ENCODE measurements at regions of chr2 and their contacts with region 1.

Region 1: GRCh38 chr2:212520340-212520739 is 18.3 kb downstream of the ERBB4 start:
- H3K4me3 ChIP-seq: no peak overlapping the region
- H3K27ac ChIP-seq: no peak overlapping the region
- H3K4me1 ChIP-seq: peaks cover 25% of the 10 kb centered on the region
- CTCF ChIP-seq: peak; percentile 43; the same call in 1 of the 2 replicates

Region 2: GRCh38 chr2:211745295-211746097 is 774.8 kb before region 1 on chr2:
- CTCF ChIA-PET with region 1: interaction called, 17 read pairs
- POLR2A ChIA-PET with region 1: no interaction called
- H3K4me3 ChIP-seq: no peak overlapping the region
- H3K27ac ChIP-seq: no peak overlapping the region
- H3K4me1 ChIP-seq: no peaks in the 10 kb centered on the region
- CTCF ChIP-seq: peak; percentile 29; the same call in 1 of the 2 replicates

Region 3: GRCh38 chr2:212147921-212148513 is 372.3 kb before region 1 on chr2:
- CTCF ChIA-PET with region 1: interaction called, 11 read pairs
- POLR2A ChIA-PET with region 1: no interaction called
- H3K4me3 ChIP-seq: no peak overlapping the region
- H3K27ac ChIP-seq: no peak overlapping the region
- H3K4me1 ChIP-seq: peaks cover 17% of the 10 kb centered on the region
- CTCF ChIP-seq: no peak

Region 4: DNA sequence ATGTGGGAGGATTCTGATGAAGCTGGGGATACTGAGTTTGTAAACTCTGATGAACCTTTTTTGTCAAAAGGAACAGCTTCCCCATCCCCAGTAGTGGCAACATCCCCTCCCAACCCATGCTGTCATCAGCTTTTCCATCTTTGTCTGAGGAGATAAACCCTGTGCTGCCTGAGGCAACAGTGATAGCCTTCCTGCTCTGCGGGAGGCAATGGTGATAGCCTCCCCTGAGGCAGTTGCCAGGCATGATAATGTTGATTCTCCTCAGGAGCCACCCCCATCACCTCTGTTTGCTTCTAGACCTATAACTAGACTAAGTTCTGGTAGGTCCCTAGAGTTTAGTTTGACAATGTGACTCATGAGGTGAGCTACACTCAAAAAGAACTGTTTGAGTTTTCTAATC is 79.2 kb before region 1 on chr2:
- CTCF ChIA-PET with region 1: no interaction called
- POLR2A ChIA-PET with region 1: no interaction called
- H3K4me3 ChIP-seq: no peak overlapping the region
- H3K27ac ChIP-seq: no peak overlapping the region
- H3K4me1 ChIP-seq: no peaks in the 10 kb centered on the region
- CTCF ChIP-seq: no peak

Region 5: GRCh38 chr2:212505586-212505985 is 14.8 kb before region 1 on chr2:
- CTCF ChIA-PET with region 1: interaction called, 10 read pairs
- POLR2A ChIA-PET with region 1: no interaction called
- H3K4me3 ChIP-seq: no peak overlapping the region
- H3K27ac ChIP-seq: no peak overlapping the region
- H3K4me1 ChIP-seq: no peaks in the 10 kb centered on the region
- CTCF ChIP-seq: no peak

Region 6: GRCh38 chr2:212532585-212532984 is 12.2 kb after region 1 on chr2:
- CTCF ChIA-PET with region 1: interaction called, 16 read pairs
- POLR2A ChIA-PET with region 1: interaction called, 4 read pairs
- H3K4me3 ChIP-seq: no peak overlapping the region
- H3K27ac ChIP-seq: no peak overlapping the region
- H3K4me1 ChIP-seq: peaks cover 42% of the 10 kb centered on the region
- CTCF ChIP-seq: no peak; the same call in 1 of the 2 replicates